Pancreas (tissue), 10 donors: ENCODE measurements at regions of chr16 and their contacts with region 1.

Region 1: DNA sequence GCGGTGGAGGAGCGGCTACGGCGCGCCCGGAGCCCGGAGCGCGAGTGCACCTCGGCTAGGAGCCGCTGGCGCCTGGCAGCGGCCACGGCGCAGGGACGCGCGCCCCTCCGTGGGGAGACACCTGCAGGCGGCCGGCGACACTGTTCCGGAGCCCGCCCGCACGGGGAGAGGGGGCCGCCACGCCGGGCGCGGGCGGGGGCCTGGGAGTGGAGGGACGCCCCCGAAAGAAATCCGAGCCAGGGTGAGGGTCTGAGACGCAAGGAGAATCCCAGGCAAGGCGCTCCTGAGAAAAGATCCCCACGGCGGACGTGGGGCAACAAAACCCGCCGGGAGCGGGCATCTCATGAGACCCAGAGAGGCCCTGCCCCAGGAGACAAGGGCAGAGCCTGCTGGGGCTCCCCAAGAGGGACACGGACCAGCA is at the start of gene GSG1L:
- DNase-seq: no peak
- ATAC-seq: no peak
- H3K4me3 ChIP-seq: peak within 1 kb of the TSS in 1 of 4 donors; percentile 6
- H3K27ac ChIP-seq: no peak within 1 kb of the TSS
- H3K4me1 ChIP-seq: no peaks in the 10 kb centered on the region
- H3K27me3 ChIP-seq: peaks cover 0 to 14% (median 6%) of the 10 kb centered on the region in 4 donors
- CTCF ChIP-seq: no peak
- total RNA-seq, gene GSG1L: 0.12 TPM in 1 of 6 donors, not detected in the others

Region 2: DNA sequence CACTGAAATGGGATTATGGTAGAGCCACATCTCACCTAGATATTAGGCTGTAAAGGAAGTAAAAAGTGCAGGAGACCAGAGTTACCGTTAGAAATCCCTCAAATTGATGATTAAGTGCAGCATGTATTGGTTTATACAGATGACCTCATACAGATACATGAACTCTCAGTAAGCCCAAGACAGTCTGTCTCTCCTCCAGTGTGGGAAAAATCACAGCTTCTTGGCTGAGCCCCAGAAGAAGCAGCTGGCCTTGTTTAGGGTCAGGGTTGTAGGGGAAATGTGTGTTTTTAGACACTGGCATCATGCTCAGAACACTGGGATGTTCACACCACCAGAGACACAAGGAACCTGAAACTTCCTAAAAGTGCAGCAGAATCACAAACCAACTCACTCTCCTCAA is 377.8 kb before region 1 on chr16:
- intact Hi-C with region 1: loop called in 1 of 3 experiments (anchors 10 kb)
- DNase-seq: no peak
- ATAC-seq: peak in 1 of 4 donors; percentile 51
- H3K4me3 ChIP-seq: no peak overlapping the region
- H3K27ac ChIP-seq: no peak overlapping the region
- H3K4me1 ChIP-seq: no peaks in the 10 kb centered on the region
- H3K27me3 ChIP-seq: no peaks in the 10 kb centered on the region
- CTCF ChIP-seq: no peak

Region 3: GRCh38 chr16:27999687-28000086 is 64.0 kb before region 1 on chr16:
- intact Hi-C with region 1: loop called in 1 of 3 experiments (anchors 10 kb)
- DNase-seq: no peak
- ATAC-seq: no peak
- H3K4me3 ChIP-seq: no peak overlapping the region
- H3K27ac ChIP-seq: no peak overlapping the region
- H3K4me1 ChIP-seq: no peaks in the 10 kb centered on the region
- H3K27me3 ChIP-seq: no peaks in the 10 kb centered on the region
- CTCF ChIP-seq: no peak

Region 4: GRCh38 chr16:28166394-28167208 is 103.0 kb after region 1 on chr16:
- intact Hi-C with region 1: no loop called
- DNase-seq: no peak
- ATAC-seq: no peak
- H3K4me3 ChIP-seq: no peak overlapping the region
- H3K27ac ChIP-seq: no peak overlapping the region
- H3K4me1 ChIP-seq: peaks cover 0 to 5% (median 0%) of the 10 kb centered on the region in 3 donors
- H3K27me3 ChIP-seq: no peaks in the 10 kb centered on the region
- CTCF ChIP-seq: no peak

Region 5: DNA sequence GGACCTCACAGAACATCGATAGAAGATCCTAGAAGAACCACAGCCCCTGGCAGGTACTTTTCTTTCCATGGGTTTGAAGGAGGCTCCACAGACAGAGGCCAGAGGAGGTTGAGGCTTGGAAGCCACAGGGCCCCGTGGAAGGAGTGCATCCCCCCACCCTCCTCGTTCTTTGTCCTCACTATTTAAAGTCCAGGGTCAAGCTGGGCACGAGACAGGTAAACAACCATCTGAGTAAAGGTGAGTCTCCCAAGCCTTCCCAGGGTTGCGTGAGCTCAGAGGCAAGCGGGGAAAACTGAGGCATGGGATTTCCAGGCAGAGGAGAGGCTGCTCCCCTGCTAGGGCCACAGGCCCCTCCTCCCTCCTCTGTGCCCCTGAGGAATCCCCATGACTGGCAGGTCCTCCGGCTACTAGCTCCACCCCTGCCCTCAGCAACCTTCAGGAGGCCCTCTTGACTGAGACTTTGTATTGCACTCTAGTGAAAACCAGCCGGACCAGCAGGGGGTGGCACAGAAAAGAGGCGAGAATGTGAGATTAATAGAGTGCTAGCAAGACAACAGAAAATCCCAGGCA is 534.1 kb after region 1 on chr16:
- intact Hi-C with region 1: no loop called
- DNase-seq: peak in 1 of 6 donors; percentile 34
- ATAC-seq: no peak
- H3K4me3 ChIP-seq: no peak overlapping the region
- H3K27ac ChIP-seq: peak overlapping the region in 2 of 4 donors; percentile 73 to 77
- H3K4me1 ChIP-seq: peaks cover 0 to 8% (median 6%) of the 10 kb centered on the region in 3 donors
- H3K27me3 ChIP-seq: no peaks in the 10 kb centered on the region
- CTCF ChIP-seq: no peak